A549 (cell line): ENCODE measurements at regions of chr1 and their contacts with region 1.

Region 1: GRCh38 chr1:180515864-180516388 is 13.5 kb upstream of the ACBD6 start:
- DNase-seq: peak; percentile 84
- ATAC-seq: peak; percentile 97 to 100
- H3K4me3 ChIP-seq: no peak overlapping the region
- H3K27ac ChIP-seq: peak overlapping the region; percentile 74 to 75
- H3K4me1 ChIP-seq: peaks cover 12% of the 10 kb centered on the region
- CTCF ChIP-seq: peak; percentile 95
- EP300 ChIP-seq: no peak
- POLR2A ChIP-seq: no peak
- RAD21 ChIP-seq: peak; percentile 97 to 98

Region 2: DNA sequence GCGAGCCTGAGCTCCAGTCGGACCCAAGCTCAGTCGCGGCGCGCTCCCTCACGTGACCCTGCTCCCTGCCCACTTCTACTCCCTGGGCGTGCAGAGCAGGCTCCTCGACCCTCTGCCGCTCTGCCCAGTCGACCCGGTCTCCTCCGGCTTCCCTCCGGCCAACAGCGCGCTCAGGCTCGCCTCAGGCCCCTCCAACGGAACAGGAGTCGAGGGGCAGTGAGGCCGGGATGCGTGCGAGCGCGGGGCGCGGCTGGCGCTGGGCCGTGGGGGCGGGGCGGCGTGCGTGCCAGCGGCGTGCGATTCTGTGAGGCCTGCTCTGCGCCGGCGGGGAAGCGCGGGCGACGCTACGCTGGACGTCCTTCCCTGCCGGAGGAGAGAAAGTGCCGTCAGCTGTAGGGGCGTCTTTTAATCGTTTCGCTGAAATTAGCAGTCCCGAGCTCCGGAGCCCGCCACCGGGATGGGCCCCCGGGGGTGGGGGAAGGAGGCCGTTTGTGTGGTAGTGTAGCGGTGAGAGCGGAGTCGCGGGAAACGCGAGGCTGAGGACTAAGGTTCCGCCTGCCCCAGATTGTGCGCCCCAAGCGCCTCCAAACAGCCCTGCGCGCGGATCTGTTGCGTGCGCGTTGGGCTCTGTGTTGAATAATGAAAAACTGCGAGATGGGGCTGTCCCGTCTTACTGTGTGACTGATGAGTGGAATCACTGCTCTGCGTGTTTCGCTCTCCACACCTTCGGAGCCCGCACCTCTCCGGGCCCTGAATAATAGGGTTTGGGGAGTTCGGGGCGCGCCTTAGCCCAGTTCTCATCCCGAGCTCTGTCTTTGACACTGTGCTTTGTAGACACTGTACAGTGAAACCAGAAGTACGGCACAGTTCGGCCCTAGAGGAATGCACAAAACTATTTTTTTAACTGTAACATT is 13.3 kb before region 1 on chr1 and contains the start of gene ACBD6:
- CTCF ChIA-PET with region 1: interaction called, 42 read pairs
- POLR2A ChIA-PET with region 1: interaction called, 18 read pairs
- DNase-seq: peak; percentile 88 to 94
- ATAC-seq: peak; percentile 90 to 95
- H3K4me3 ChIP-seq: peak within 1 kb of the TSS; percentile 91
- H3K27ac ChIP-seq: peak within 1 kb of the TSS; percentile 94 to 98
- H3K4me1 ChIP-seq: peaks cover 36% of the 10 kb centered on the region; the same call in 2 of the 3 replicates
- CTCF ChIP-seq: no peak
- EP300 ChIP-seq: no peak
- POLR2A ChIP-seq: peak; percentile 80
- RAD21 ChIP-seq: no peak
- polyA plus RNA-seq, gene ACBD6: 78.7 and 91.3 TPM in 2 replicates

Region 3: DNA sequence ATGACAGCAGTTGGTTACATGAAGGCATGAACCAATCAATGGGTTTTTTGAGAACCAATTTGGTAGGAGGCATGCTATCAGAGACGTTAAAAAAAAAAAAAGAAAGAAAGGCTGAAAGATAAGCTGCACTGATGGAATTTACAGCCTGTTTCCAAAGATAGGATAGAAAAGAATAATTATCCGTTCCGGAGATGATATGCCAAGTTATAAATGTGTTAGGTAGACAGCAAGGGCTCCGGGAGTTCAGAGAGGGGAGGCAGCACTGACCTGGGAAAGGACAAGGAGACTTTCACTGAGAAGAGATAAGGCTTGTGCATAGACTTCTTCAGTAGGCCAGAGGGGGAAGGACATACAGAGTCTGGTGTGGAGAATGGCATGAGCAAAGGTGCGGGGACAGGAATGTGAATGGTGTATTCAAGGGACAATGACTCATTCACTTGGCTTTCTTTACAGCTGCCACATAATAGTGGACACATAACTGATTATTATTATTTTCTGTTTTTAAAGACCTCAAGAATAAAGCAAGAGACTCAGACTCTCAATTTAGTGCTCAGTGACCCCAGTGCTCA is 11.3 kb after region 1 on chr1:
- CTCF ChIA-PET with region 1: interaction called, 23 read pairs
- POLR2A ChIA-PET with region 1: no interaction called
- DNase-seq: peak in 1 of 2 experiments; percentile 36
- ATAC-seq: peak; percentile 46 to 72; a peak in 4 of 6 replicates
- H3K4me3 ChIP-seq: no peak overlapping the region
- H3K27ac ChIP-seq: peak overlapping the region; percentile 8 to 23; a peak in 2 of 6 replicates
- H3K4me1 ChIP-seq: peaks cover 22% of the 10 kb centered on the region
- CTCF ChIP-seq: no peak
- EP300 ChIP-seq: no peak
- POLR2A ChIP-seq: no peak
- RAD21 ChIP-seq: no peak

Region 4: DNA sequence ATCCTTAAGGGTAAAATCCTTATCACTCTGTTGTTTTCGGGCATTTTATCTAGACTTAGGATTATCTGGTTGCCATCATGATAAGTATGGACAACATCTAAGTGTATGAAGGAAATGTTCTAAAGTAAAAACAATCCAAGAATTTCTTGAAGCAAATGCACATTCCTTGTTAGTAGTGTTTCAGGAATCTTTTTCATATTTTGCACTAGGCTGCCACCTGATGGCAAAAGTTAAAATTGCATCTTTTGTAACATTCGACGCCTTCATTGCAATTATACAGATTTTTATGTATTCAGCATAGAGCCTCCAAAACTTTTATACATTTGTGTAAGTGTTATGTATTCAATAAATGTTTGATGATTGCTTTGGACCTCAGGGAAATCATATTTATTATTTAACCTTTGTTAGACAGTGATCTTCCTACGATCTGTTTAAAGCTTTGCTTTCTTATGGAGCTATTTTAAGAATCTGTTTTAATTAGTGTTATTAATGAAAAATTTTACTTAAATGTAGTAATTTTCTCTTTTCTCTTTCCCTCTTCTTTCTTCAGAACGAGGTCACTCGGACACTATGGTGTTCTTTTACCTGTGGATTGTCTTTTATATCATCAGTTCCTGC is 347.3 kb after region 1 on chr1:
- CTCF ChIA-PET with region 1: interaction called, 145 read pairs
- POLR2A ChIA-PET with region 1: interaction called, 3 read pairs
- DNase-seq: peak; percentile 30 to 50
- ATAC-seq: peak in 1 of 2 experiments; percentile 63; a peak in 3 of 6 replicates
- H3K4me3 ChIP-seq: no peak overlapping the region
- H3K27ac ChIP-seq: peak overlapping the region in 1 of 2 experiments; percentile 8; a peak in 1 of 6 replicates
- H3K4me1 ChIP-seq: peaks cover 12% of the 10 kb centered on the region; the same call in 2 of the 3 replicates
- CTCF ChIP-seq: peak; percentile 90
- EP300 ChIP-seq: no peak
- POLR2A ChIP-seq: no peak
- RAD21 ChIP-seq: peak; percentile 91 to 94

Region 5: GRCh38 chr1:181166377-181167196 is 650.7 kb after region 1 on chr1:
- CTCF ChIA-PET with region 1: interaction called, 29 read pairs
- POLR2A ChIA-PET with region 1: no interaction called
- DNase-seq: peak; percentile 72 to 80
- ATAC-seq: peak; percentile 96 to 100
- H3K4me3 ChIP-seq: no peak overlapping the region
- H3K27ac ChIP-seq: peak overlapping the region in 1 of 2 experiments; percentile 52; a peak in 1 of 6 replicates
- H3K4me1 ChIP-seq: no peaks in the 10 kb centered on the region
- CTCF ChIP-seq: peak; percentile 95
- EP300 ChIP-seq: no peak
- POLR2A ChIP-seq: no peak
- RAD21 ChIP-seq: peak; percentile 83 to 97